Activated naive CD8-positive, alpha-beta T cell treated with anti-CD3 and anti-CD28 coated beads, Interleukin-2, amount 10 ng/mL, durations not matched to agents 7 days and 5 days (primary cell): ENCODE measurements at regions of chr14 and their contacts with region 1.

Region 1: DNA sequence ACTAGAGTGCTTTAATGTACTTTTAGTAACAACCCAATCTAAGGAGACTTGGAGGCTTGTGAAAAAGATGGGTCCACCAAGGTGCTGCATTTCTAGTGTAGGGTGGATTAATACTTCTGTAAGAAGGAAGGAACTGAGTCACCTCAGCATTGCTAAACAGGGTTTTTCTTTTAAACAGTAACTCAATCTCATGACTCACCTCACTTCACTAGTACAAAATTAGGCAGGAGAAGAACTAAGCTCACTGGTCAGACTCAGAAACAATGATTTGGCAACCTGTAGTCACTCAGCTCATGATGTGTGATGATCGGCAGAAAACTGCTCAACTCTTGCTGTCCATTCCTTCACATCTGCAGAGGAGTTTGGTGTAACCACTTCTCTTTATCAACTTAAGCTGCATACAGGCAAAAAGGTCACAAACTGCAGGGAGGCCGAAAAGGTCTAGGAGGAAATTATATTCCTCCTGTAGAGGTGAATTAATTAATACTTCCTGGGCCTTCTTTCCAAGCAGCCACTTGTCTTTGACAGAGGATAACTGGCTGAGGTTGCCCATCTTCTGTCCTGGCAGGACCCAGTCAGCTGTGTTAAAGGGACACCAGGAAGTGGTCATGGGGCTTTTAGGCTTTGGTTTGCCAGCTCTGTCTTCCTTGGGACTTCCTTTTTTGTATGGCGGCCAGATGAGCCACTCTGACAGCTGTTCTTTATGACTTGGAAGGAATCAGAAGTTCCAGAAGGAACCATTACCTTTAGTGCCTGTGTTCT is 466.9 kb downstream of the FUT8 start:
- DNase-seq: no peak
- ATAC-seq: peak; percentile 71
- H3K4me3 Mint-ChIP-seq: peak overlapping the region; percentile 31
- H3K27ac Mint-ChIP-seq: peak overlapping the region; percentile 84
- H3K4me1 Mint-ChIP-seq: peaks cover 23% of the 10 kb centered on the region
- H3K27me3 Mint-ChIP-seq: no peaks in the 10 kb centered on the region

Region 2: GRCh38 chr14:65704850-65705249 is 174.6 kb before region 1 on chr14:
- POLR2A ChIA-PET with region 1: no interaction called
- DNase-seq: no peak
- ATAC-seq: no peak
- H3K4me3 Mint-ChIP-seq: no peak overlapping the region
- H3K27ac Mint-ChIP-seq: no peak overlapping the region
- H3K4me1 Mint-ChIP-seq: peaks cover 4% of the 10 kb centered on the region
- H3K27me3 Mint-ChIP-seq: no peaks in the 10 kb centered on the region

Region 3: DNA sequence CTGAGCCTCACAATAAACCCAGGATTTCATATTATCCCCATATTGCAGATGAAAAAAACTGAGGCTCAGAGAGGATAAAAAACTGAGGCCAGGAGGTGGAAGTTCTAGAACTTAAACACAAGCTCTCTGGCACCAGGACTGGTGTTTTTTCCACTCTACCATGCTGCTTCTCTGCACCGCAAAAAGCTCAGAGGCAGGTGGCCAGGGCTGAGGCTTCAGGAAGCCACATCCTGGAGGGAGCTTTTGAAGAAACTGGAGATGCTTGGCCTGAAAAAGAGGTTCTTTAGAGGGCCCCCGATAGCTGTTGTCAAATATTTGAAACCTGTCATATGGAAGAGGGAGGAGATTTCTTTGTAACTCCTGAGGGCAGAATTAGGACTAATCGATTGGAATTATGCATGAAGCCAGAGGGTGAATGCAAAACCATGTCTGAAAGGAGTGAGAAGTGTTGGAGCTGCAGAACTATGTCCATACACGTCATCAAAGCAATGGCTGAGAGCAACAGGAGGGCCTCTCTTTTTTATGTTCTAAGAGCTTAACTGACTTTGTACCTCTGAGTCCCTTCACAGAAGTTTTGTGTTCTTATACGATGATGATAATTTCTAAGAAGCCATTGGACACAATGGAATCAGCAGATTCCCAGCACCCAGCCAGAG is 18.3 kb before region 1 on chr14:
- POLR2A ChIA-PET with region 1: interaction called, 22 read pairs
- DNase-seq: peak; percentile 71
- ATAC-seq: peak; percentile 90
- H3K4me3 Mint-ChIP-seq: peak overlapping the region; percentile 36
- H3K27ac Mint-ChIP-seq: peak overlapping the region; percentile 86
- H3K4me1 Mint-ChIP-seq: peaks cover 56% of the 10 kb centered on the region
- H3K27me3 Mint-ChIP-seq: no peaks in the 10 kb centered on the region

Region 4: GRCh38 chr14:65866886-65867285 is 12.5 kb before region 1 on chr14:
- POLR2A ChIA-PET with region 1: interaction called, 22 read pairs
- DNase-seq: no peak
- ATAC-seq: no peak
- H3K4me3 Mint-ChIP-seq: no peak overlapping the region
- H3K27ac Mint-ChIP-seq: no peak overlapping the region
- H3K4me1 Mint-ChIP-seq: peaks cover 38% of the 10 kb centered on the region
- H3K27me3 Mint-ChIP-seq: no peaks in the 10 kb centered on the region

Region 5: DNA sequence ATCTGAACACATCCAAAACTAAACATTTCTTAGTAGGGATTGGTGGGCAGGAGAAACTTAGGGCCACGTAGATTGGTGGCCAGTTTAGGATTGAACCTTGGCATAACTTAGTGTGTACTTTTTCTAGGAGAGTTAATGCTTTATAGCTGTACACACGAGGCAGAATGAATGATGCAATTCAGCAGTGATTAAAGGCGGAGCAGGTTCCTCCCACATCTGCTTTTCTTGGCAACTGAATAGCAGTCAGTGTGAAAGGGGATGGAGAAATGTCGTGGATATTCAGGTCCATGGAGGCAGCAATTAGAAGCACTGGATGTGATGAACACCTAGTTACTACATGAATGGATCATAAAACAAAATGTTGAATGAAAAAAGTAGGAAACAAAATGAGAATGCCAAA is 26.9 kb after region 1 on chr14:
- POLR2A ChIA-PET with region 1: no interaction called
- DNase-seq: no peak
- ATAC-seq: no peak
- H3K4me3 Mint-ChIP-seq: no peak overlapping the region
- H3K27ac Mint-ChIP-seq: no peak overlapping the region
- H3K4me1 Mint-ChIP-seq: peaks cover 21% of the 10 kb centered on the region
- H3K27me3 Mint-ChIP-seq: no peaks in the 10 kb centered on the region